T-cell (primary cell): ENCODE measurements at regions of chr2 and their contacts with region 1.

Region 1: DNA sequence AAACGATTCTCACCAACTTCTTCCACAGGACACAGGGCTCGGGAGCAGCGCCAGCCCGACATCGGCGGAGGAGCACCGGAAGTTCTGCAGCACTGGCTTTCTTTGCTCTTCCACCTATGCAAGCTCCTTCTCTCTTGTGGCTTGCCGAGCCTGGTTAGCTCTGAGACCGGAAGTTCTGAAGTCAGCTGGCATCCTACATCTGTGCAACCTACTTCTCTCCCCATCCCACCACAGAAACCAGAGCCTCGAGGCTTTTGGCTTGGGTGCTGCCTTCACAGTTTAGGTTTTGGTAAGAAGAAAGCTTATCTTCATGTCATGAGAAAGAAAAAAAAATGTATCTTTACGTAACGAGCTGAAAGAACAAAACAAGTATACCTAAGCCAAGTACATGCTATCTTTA is 111.7 kb downstream of the ANKRD44 start:
- DNase-seq: peak; percentile 68 to 98 (median 90)
- ATAC-seq: peak; percentile 88 to 93 (median 92)
- H3K4me3 ChIP-seq: peak overlapping the region; percentile 56 to 79
- H3K4me3 Mint-ChIP-seq: peak overlapping the region; percentile 84 to 91 (median 90)
- H3K27ac ChIP-seq: peak overlapping the region; percentile 95
- H3K27ac Mint-ChIP-seq: peak overlapping the region; percentile 96 to 99
- H3K4me1 ChIP-seq: peaks cover 52 to 69% of the 10 kb centered on the region in 2 experiments
- H3K4me1 Mint-ChIP-seq: peaks cover 90 to 94% (median 91%) of the 10 kb centered on the region in 3 donors
- H3K27me3 ChIP-seq: no peaks in the 10 kb centered on the region
- H3K27me3 Mint-ChIP-seq: no peaks in the 10 kb centered on the region

Region 2: GRCh38 chr2:197028230-197028629 is 170.7 kb before region 1 on chr2:
- CTCF ChIA-PET with region 1: no interaction called
- POLR2A ChIA-PET with region 1: no interaction called
- DNase-seq: no peak
- ATAC-seq: no peak
- H3K4me3 ChIP-seq: no peak overlapping the region
- H3K4me3 Mint-ChIP-seq: no peak overlapping the region
- H3K27ac ChIP-seq: no peak overlapping the region
- H3K27ac Mint-ChIP-seq: peak overlapping the region; percentile 70 to 77
- H3K4me1 ChIP-seq: no peaks in the 10 kb centered on the region
- H3K4me1 Mint-ChIP-seq: peaks cover 25 to 46% (median 29%) of the 10 kb centered on the region in 3 donors
- H3K27me3 ChIP-seq: no peaks in the 10 kb centered on the region
- H3K27me3 Mint-ChIP-seq: no peaks in the 10 kb centered on the region

Region 3: GRCh38 chr2:197168705-197169104 is 30.2 kb before region 1 on chr2:
- CTCF ChIA-PET with region 1: interaction called in 1 of 2 experiments, 11 read pairs
- POLR2A ChIA-PET with region 1: interaction called in 1 of 2 experiments, 4 read pairs
- DNase-seq: peak; percentile 36 to 82 (median 65)
- ATAC-seq: peak; percentile 69 to 86 (median 72)
- H3K4me3 ChIP-seq: no peak overlapping the region
- H3K4me3 Mint-ChIP-seq: peak overlapping the region in 1 of 3 donors; percentile 9
- H3K27ac ChIP-seq: peak overlapping the region; percentile 16
- H3K27ac Mint-ChIP-seq: peak overlapping the region; percentile 72
- H3K4me1 ChIP-seq: peaks cover 9 to 42% of the 10 kb centered on the region in 2 experiments
- H3K4me1 Mint-ChIP-seq: peaks cover 73 to 88% (median 80%) of the 10 kb centered on the region in 3 donors
- H3K27me3 ChIP-seq: no peaks in the 10 kb centered on the region
- H3K27me3 Mint-ChIP-seq: no peaks in the 10 kb centered on the region

Region 4: DNA sequence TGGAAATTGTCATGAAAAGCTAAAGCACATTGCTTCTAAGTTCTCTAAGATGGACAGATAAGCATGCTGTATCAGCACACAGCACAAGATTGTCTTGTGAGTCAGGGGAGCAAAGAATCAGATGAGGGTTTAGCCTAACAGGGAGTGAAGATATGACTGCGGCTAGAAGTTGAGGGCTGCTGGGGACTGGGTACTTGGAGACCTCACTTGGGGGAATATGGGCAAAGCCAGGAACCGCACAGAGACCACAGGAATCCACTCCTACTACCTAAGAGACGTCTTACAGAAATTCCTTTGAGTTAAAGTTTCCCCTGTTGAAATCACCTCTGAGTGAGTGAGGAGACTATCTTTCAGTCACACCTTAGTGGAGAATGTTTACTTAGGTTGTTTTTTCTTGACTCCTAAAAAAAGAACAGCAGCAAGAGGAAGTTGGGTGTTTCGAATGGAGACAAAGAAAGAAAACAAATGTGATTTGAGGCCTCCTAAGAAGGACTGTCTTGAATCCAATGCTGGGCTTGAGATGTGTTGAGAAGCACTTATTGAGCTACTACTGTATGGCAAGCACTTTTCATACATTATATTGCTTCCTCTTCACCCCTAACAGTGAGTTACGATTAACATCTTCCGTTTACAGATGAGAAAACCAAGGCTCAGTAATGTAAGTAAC is 11.0 kb after region 1 on chr2:
- CTCF ChIA-PET with region 1: interaction called, 4 to 16 read pairs
- POLR2A ChIA-PET with region 1: interaction called, 9 to 16 read pairs
- DNase-seq: peak in 8 of 35 experiments; percentile 9 to 64 (median 27)
- ATAC-seq: peak; percentile 8 to 35 (median 28)
- H3K4me3 ChIP-seq: no peak overlapping the region
- H3K4me3 Mint-ChIP-seq: peak overlapping the region; percentile 52 to 79 (median 63)
- H3K27ac ChIP-seq: peak overlapping the region; percentile 95
- H3K27ac Mint-ChIP-seq: peak overlapping the region; percentile 98 to 99
- H3K4me1 ChIP-seq: peaks cover 84 to 94% of the 10 kb centered on the region in 2 experiments
- H3K4me1 Mint-ChIP-seq: peaks cover 97 to 99% (median 99%) of the 10 kb centered on the region in 3 donors
- H3K27me3 ChIP-seq: no peaks in the 10 kb centered on the region
- H3K27me3 Mint-ChIP-seq: no peaks in the 10 kb centered on the region

Region 5: GRCh38 chr2:197229509-197230443 is 30.9 kb after region 1 on chr2:
- CTCF ChIA-PET with region 1: interaction called in 1 of 2 experiments, 13 read pairs
- POLR2A ChIA-PET with region 1: interaction called in 1 of 2 experiments, 3 read pairs
- DNase-seq: no peak
- ATAC-seq: no peak
- H3K4me3 ChIP-seq: no peak overlapping the region
- H3K4me3 Mint-ChIP-seq: peak overlapping the region; percentile 9 to 31 (median 20)
- H3K27ac ChIP-seq: no peak overlapping the region
- H3K27ac Mint-ChIP-seq: peak overlapping the region; percentile 89 to 93
- H3K4me1 ChIP-seq: peaks cover 64 to 67% of the 10 kb centered on the region in 2 experiments
- H3K4me1 Mint-ChIP-seq: peaks cover 94 to 98% (median 96%) of the 10 kb centered on the region in 3 donors
- H3K27me3 ChIP-seq: no peaks in the 10 kb centered on the region
- H3K27me3 Mint-ChIP-seq: no peaks in the 10 kb centered on the region

Region 6: GRCh38 chr2:197239434-197239833 is 40.5 kb after region 1 on chr2:
- CTCF ChIA-PET with region 1: interaction called, 10 to 13 read pairs
- POLR2A ChIA-PET with region 1: interaction called, 5 to 7 read pairs
- DNase-seq: peak in 1 of 35 experiments; percentile 53
- ATAC-seq: peak in 3 of 4 experiments; percentile 27 to 33 (median 30)
- H3K4me3 ChIP-seq: peak overlapping the region; percentile 23 to 53
- H3K4me3 Mint-ChIP-seq: peak overlapping the region; percentile 74 to 80 (median 78)
- H3K27ac ChIP-seq: peak overlapping the region; percentile 95
- H3K27ac Mint-ChIP-seq: peak overlapping the region; percentile 93 to 98
- H3K4me1 ChIP-seq: peaks cover 68 to 85% of the 10 kb centered on the region in 2 experiments
- H3K4me1 Mint-ChIP-seq: peaks cover 86 to 90% (median 88%) of the 10 kb centered on the region in 3 donors
- H3K27me3 ChIP-seq: no peaks in the 10 kb centered on the region
- H3K27me3 Mint-ChIP-seq: no peaks in the 10 kb centered on the region

Region 7: GRCh38 chr2:197255543-197255942 is 56.7 kb after region 1 on chr2:
- CTCF ChIA-PET with region 1: interaction called in 1 of 2 experiments, 12 read pairs
- POLR2A ChIA-PET with region 1: interaction called, 3 to 6 read pairs
- DNase-seq: peak; percentile 35 to 87 (median 72)
- ATAC-seq: peak; percentile 72 to 92 (median 82)
- H3K4me3 ChIP-seq: peak overlapping the region; percentile 24 to 29
- H3K4me3 Mint-ChIP-seq: peak overlapping the region; percentile 77 to 83 (median 77)
- H3K27ac ChIP-seq: peak overlapping the region; percentile 95
- H3K27ac Mint-ChIP-seq: peak overlapping the region; percentile 97 to 98
- H3K4me1 ChIP-seq: peaks cover 50 to 66% of the 10 kb centered on the region in 2 experiments
- H3K4me1 Mint-ChIP-seq: peaks cover 78 to 86% (median 83%) of the 10 kb centered on the region in 3 donors
- H3K27me3 ChIP-seq: no peaks in the 10 kb centered on the region
- H3K27me3 Mint-ChIP-seq: no peaks in the 10 kb centered on the region